ENCODE measurements at regions of chr14 and their contacts with region 1.

Region 1: DNA sequence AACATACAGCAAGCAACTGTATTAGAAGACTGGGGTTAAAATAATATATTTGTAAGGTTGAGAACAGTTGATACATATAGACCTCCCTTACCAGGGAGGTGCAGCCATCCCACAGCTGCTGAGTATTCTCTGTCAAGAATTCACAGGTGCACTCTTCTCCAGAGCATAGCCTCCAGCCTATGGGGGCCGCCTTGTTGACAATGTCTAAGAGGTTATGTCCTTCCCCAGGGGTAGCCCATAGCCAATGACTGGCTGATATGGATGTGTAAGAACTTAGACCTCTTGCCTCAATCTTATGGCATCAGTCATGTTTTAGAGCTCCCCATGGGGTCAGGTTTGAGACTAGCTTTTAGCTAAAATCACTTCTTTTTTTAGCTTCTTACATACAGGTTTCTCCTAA is 12.4 kb downstream of the RNASE10 start:
- DNase-seq: no peak
- H3K4me3 ChIP-seq: no peak overlapping the region
- H3K27me3 ChIP-seq: no peaks in the 10 kb centered on the region
- CTCF ChIP-seq: no peak

Region 2: GRCh38 chr14:20377171-20377570 is 140.6 kb before region 1 on chr14:
- CTCF ChIA-PET with region 1: no interaction called
- POLR2A ChIA-PET with region 1: interaction called, 10 read pairs
- DNase-seq: no peak
- H3K4me3 ChIP-seq: no peak overlapping the region
- H3K27me3 ChIP-seq: no peaks in the 10 kb centered on the region
- CTCF ChIP-seq: no peak

Measured in BJ (cell line).